Caco-2 (cell line): ENCODE measurements at regions of chr12 and their contacts with region 1.

Region 1: DNA sequence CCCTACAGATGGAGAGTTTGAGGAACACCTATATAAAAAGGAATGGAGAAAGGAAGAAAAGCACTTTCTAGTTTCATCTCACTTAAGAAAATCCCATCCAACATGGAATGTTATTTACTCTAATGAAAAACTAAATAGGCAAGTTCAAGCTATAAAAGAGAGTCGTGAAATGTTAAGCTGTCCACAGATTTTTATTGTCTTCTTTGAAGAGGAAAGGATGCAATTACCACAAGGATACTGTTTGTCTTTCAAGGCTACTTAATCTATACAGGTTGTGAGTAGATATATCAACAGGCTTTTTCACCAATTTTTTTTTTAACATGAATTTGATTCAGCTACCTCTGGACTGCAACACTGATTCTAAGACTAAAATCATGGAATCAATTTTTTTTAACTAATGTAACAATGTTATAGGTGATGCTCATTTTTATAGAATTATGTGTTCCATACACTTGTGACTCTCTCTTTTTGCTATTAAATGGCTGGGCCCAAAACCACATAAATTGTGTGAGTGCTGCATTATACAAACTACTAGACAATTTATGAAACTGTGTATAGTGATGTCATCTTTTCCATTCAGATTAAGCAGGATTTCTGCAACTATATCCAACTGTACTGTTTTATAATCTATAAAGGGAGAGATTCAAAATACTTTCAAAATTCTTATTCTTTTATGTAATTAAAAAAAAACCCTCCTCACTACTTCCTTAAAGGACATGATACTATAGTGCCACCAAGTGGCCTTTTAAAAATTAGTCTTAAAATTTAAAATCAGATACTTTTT is 26.8 kb upstream of the BMAL2 start:
- DNase-seq: peak in 1 of 2 experiments; percentile 27
- H3K4me3 ChIP-seq: no peak overlapping the region
- H3K4me3 Mint-ChIP-seq: no peak overlapping the region
- H3K27ac Mint-ChIP-seq: no peak overlapping the region
- H3K4me1 ChIP-seq: peaks cover 11% of the 10 kb centered on the region
- H3K4me1 Mint-ChIP-seq: peaks cover 19% of the 10 kb centered on the region
- H3K27me3 ChIP-seq: no peaks in the 10 kb centered on the region
- H3K27me3 Mint-ChIP-seq: no peaks in the 10 kb centered on the region
- CTCF ChIP-seq: peak; percentile 38 to 77

Region 2: DNA sequence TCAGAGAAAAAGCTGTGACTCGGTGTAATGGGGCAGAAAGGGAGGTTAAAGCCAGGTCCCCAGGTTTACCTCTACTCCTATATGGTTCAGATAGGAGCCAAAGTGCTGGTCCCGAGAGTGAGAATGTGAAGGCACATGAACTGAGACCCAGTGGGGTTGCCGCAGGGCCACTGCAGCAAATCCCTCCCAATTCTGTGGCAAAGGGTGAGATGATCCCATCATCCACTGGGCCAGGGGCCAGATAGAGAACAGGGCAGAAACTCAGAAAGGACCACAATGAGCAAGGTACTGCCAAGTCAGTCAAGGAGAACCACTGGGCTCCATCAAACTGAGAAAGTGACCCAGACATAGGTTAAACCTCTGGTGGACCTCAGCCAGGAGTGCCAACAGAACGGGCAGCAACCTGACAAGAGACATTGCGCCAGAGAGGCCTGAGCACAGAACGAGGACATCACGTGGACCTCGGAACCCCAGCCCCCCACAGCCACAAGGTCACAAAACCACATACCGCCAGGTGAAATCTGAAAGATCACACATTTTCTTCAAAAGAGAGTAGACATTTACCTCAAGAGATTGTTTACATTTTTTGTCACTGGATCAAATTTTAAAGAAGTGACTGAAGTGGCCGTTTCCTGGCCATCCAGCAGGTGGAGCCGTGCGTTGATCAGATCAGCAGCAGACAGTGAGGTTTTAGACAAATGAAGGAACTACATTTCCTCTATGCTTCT is 452.4 kb before region 1 on chr12:
- CTCF ChIA-PET with region 1: no interaction called
- POLR2A ChIA-PET with region 1: interaction called, 3 read pairs
- intact Hi-C with region 1: loop called (anchors 1 kb)
- DNase-seq: peak; percentile 66 to 79
- H3K4me3 ChIP-seq: no peak overlapping the region
- H3K4me3 Mint-ChIP-seq: no peak overlapping the region
- H3K27ac Mint-ChIP-seq: no peak overlapping the region
- H3K4me1 ChIP-seq: peaks cover 6% of the 10 kb centered on the region; the same call in 1 of the 2 replicates
- H3K4me1 Mint-ChIP-seq: no peaks in the 10 kb centered on the region
- H3K27me3 ChIP-seq: no peaks in the 10 kb centered on the region
- H3K27me3 Mint-ChIP-seq: no peaks in the 10 kb centered on the region
- CTCF ChIP-seq: peak; percentile 96 to 97

Region 3: DNA sequence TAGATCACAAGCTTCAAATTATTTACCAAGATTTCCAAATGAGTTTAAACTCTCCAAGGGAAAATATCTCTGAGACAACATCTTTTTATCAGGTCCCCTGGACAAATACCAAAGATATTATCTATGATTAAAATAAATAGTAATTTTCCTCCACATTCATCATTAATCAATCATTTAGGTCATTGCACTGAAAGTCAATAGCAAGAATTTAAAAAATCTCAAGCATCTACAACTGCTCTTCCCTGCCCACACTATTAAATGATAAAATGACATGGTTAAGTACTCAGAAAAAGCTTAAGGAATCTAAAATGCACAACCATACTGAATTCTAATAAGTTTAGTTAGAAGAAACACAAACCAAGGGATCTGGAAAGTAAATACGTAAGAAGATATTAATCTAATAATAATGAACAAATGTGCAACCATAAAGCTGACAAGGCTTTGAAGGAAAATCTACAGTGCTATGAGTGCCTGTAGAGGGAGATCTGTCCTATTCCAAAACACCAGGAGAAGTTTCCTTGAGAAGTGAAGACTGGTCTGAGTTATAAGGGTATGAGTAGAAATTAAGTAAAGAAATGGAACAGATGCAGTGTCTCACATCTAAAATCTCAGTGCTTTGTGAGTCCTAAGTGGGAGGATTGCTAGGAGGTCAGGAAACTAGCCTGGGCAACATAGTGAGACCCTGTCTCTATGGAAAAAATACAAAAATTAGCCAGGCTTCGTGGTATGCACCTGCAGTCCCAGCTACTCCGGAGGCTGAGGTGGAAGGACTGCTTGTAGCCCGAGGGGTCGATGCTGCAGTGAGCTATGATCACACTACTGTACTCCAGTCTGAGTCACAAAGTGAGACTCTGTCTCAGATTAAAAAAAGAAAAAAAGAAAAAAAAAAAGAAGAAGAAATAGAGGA is 387.3 kb before region 1 on chr12:
- CTCF ChIA-PET with region 1: interaction called, 3 read pairs
- POLR2A ChIA-PET with region 1: no interaction called
- intact Hi-C with region 1: loop called (anchors 2 kb)
- DNase-seq: peak; percentile 41 to 58
- H3K4me3 ChIP-seq: no peak overlapping the region
- H3K4me3 Mint-ChIP-seq: peak overlapping the region; percentile 3
- H3K27ac Mint-ChIP-seq: peak overlapping the region; percentile 70
- H3K4me1 ChIP-seq: peaks cover 20% of the 10 kb centered on the region
- H3K4me1 Mint-ChIP-seq: peaks cover 19% of the 10 kb centered on the region
- H3K27me3 ChIP-seq: no peaks in the 10 kb centered on the region
- H3K27me3 Mint-ChIP-seq: no peaks in the 10 kb centered on the region
- CTCF ChIP-seq: peak in 1 of 2 experiments; percentile 68

Region 4: DNA sequence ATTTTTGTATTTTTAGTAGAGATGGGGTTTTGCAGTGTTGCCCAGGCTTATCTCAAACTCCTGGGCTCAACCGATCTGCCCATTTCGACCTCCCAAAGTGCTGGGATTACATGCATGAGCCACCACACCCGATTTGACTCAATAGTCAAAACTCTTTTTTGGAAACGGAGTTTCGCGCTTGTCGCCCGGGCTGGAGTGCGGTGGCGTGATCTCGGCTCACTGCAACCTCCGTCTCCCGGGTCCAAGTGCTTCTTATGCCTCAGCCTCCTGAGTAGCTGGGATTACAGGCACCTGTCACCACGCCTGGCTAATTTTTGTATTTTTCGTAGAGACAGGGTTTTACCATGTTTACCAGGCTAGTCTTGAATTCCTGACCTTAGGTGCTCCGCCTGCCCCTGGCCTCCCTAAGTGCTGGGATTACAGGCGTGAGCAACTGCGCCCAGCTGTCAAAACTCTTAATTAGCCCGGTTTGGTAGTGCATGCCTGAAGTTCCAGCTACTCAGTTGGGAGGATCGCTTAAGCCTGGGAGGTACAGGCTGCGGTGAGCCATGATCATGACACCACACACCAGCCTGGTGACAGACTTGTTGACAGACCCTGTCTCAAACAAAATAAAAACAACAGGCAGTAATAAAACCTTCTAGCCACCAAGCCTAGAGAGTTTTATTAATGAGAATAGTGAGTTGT is 271.1 kb before region 1 on chr12:
- CTCF ChIA-PET with region 1: interaction called, 4 read pairs
- POLR2A ChIA-PET with region 1: no interaction called
- intact Hi-C with region 1: loop called (anchors 5 kb)
- DNase-seq: no peak
- H3K4me3 ChIP-seq: no peak overlapping the region
- H3K4me3 Mint-ChIP-seq: no peak overlapping the region
- H3K27ac Mint-ChIP-seq: no peak overlapping the region
- H3K4me1 ChIP-seq: no peaks in the 10 kb centered on the region
- H3K4me1 Mint-ChIP-seq: peaks cover 6% of the 10 kb centered on the region
- H3K27me3 ChIP-seq: no peaks in the 10 kb centered on the region
- H3K27me3 Mint-ChIP-seq: no peaks in the 10 kb centered on the region
- CTCF ChIP-seq: no peak

Region 5: GRCh38 chr12:27048822-27049752 is 256.8 kb before region 1 on chr12:
- CTCF ChIA-PET with region 1: no interaction called
- POLR2A ChIA-PET with region 1: no interaction called
- intact Hi-C with region 1: no loop called
- DNase-seq: no peak
- H3K4me3 ChIP-seq: no peak overlapping the region
- H3K4me3 Mint-ChIP-seq: no peak overlapping the region
- H3K27ac Mint-ChIP-seq: no peak overlapping the region
- H3K4me1 ChIP-seq: no peaks in the 10 kb centered on the region
- H3K4me1 Mint-ChIP-seq: no peaks in the 10 kb centered on the region
- H3K27me3 ChIP-seq: no peaks in the 10 kb centered on the region
- H3K27me3 Mint-ChIP-seq: no peaks in the 10 kb centered on the region
- CTCF ChIP-seq: no peak

Region 6: GRCh38 chr12:27123642-27124041 is 182.2 kb before region 1 on chr12:
- CTCF ChIA-PET with region 1: no interaction called
- POLR2A ChIA-PET with region 1: no interaction called
- intact Hi-C with region 1: loop called (anchors 2 kb)
- DNase-seq: no peak
- H3K4me3 ChIP-seq: no peak overlapping the region
- H3K4me3 Mint-ChIP-seq: no peak overlapping the region
- H3K27ac Mint-ChIP-seq: no peak overlapping the region
- H3K4me1 ChIP-seq: no peaks in the 10 kb centered on the region
- H3K4me1 Mint-ChIP-seq: no peaks in the 10 kb centered on the region
- H3K27me3 ChIP-seq: no peaks in the 10 kb centered on the region
- H3K27me3 Mint-ChIP-seq: peaks cover 6% of the 10 kb centered on the region
- CTCF ChIP-seq: peak; percentile 18 to 32

Region 7: DNA sequence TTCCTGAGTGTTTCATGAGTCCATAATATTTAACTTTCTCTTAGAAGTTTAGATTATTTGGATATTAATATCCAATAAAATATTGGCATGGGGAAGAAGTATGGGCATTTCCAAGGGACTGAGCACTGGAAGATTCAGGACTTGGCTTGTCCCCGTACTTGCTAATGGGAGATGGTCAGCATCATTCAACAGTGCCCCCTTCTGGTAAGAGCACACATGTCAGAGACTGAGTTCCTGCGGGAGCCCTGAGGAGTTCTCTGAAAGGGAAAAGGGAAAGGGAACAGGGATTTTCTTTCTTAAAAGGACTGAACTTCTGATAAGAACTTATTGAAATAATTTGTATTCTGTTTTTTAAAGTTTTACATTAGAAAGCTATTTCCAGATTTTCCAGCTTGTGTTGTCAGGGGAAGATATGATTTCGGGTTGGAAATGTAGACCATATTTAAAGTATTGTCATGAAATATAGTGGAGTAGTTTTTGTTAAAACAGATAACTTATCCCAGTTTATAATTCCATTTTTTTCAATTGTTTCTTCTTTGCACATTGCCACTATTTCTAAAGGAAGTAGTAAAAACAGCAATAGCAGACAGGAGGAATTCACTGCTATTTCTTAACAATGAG is 163.7 kb before region 1 on chr12:
- CTCF ChIA-PET with region 1: no interaction called
- POLR2A ChIA-PET with region 1: no interaction called
- intact Hi-C with region 1: loop called (anchors 1 kb)
- DNase-seq: peak; percentile 77 to 82
- H3K4me3 ChIP-seq: no peak overlapping the region
- H3K4me3 Mint-ChIP-seq: no peak overlapping the region
- H3K27ac Mint-ChIP-seq: no peak overlapping the region
- H3K4me1 ChIP-seq: no peaks in the 10 kb centered on the region
- H3K4me1 Mint-ChIP-seq: peaks cover 6% of the 10 kb centered on the region
- H3K27me3 ChIP-seq: no peaks in the 10 kb centered on the region
- H3K27me3 Mint-ChIP-seq: peaks cover 2% of the 10 kb centered on the region
- CTCF ChIP-seq: peak; percentile 90 to 94

Region 8: DNA sequence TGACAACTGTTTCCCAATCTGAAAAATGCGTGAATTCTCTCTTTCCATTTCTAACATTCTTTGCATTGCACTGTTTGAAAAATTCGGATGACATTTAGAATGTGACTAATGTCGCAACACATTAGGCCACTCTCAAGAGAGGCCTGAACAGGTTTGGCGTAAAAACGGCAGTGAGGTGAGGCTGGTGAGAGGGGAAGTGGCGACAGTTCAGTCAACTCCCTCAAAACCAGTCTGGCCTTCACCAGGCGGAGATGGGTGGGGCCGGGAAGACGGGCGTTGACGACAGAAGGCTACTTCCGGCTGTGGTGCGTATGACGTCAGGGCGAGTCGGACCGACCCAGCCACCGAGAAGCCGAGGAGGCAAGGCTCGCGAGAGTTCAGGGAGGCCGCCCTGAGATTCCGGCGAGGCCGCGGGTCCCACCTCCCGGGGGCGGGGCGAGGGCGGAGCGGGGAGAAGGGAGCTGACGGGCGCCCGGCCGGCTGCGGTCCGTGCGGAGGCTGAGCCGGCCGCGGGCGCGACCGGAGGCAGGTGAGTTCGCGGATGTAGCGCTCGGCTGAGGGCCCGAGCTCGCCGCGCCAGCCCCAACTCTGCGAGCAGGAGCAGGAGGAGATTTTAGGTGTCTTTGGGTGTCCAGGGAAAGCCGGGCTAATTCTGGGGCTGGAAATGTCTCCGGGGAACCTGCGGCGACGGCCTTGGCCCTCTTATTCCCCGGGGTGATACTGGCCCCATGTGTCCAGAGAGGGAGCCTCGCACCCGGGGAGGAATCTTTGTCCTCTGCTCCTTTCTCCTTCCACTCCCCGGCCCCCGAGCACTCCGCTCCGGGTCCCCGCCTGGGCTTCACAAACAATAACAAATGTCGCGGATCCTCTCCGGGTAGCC is 61.8 kb before region 1 on chr12 and contains the start of gene STK38L:
- CTCF ChIA-PET with region 1: interaction called, 11 read pairs
- POLR2A ChIA-PET with region 1: interaction called, 5 read pairs
- intact Hi-C with region 1: loop called (anchors 1 kb)
- DNase-seq: peak; percentile 100
- H3K4me3 ChIP-seq: peak within 1 kb of the TSS; percentile 84
- H3K4me3 Mint-ChIP-seq: peak within 1 kb of the TSS; percentile 88
- H3K27ac Mint-ChIP-seq: peak within 1 kb of the TSS; percentile 89
- H3K4me1 ChIP-seq: peaks cover 10% of the 10 kb centered on the region; the same call in 1 of the 2 replicates
- H3K4me1 Mint-ChIP-seq: peaks cover 20% of the 10 kb centered on the region
- H3K27me3 ChIP-seq: no peaks in the 10 kb centered on the region
- H3K27me3 Mint-ChIP-seq: peaks cover 3% of the 10 kb centered on the region
- CTCF ChIP-seq: peak; percentile 26 to 27
- total RNA-seq, gene STK38L: 52.0 and 59.4 TPM in 2 replicates

Region 9: GRCh38 chr12:27347779-27348178 is 41.9 kb after region 1 on chr12:
- CTCF ChIA-PET with region 1: no interaction called
- POLR2A ChIA-PET with region 1: no interaction called
- intact Hi-C with region 1: no loop called
- DNase-seq: no peak
- H3K4me3 ChIP-seq: no peak overlapping the region
- H3K4me3 Mint-ChIP-seq: no peak overlapping the region
- H3K27ac Mint-ChIP-seq: no peak overlapping the region
- H3K4me1 ChIP-seq: no peaks in the 10 kb centered on the region
- H3K4me1 Mint-ChIP-seq: peaks cover 11% of the 10 kb centered on the region
- H3K27me3 ChIP-seq: no peaks in the 10 kb centered on the region
- H3K27me3 Mint-ChIP-seq: no peaks in the 10 kb centered on the region
- CTCF ChIP-seq: no peak